ENCODE measurements at regions of chr1 and their contacts with region 1.

Region 1: DNA sequence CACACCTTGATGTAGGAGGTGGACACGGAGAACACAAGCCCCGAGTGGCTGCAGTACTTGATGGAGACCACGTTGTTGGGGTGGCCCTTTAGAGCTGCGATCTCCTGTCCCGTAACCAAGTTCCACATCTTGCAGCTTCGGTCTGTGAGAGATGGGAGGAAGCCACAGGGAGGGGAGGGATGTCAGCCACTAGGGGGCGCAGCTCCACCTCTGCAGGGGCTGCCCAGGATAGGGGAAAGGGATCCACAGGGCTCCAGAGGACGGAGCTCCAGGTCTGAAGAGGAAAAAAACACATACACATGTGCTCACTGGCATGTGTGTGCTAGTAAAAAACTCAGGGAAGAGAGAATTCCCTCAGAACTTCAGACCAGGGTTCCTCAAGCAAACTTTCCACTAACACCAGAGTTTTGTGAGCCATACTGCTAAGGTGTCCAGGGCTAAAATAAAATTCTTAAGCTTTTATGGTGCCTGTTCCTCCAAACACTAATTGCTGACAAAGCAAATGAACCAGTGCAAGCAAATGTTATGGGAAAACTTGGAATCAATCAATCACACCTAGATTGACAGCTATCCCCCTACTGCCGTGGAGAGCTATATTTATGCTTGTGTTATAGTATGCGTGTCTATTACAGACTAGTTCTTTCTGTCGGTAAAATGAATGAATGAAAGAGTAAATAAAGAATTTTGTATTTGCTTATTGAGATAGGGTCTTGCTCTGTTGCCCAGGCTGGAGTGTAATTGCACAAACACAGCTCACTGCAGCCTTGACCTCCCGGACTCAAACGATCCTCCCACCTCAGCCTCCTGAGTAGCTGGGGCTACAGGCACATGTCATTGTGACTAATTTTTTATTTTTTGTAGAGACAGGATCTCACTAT is 43.7 kb downstream of the KIF21B start:
- H3K4me3 ChIP-seq: no peak overlapping the region
- H3K27ac ChIP-seq: no peak overlapping the region
- H3K4me1 ChIP-seq: no peaks in the 10 kb centered on the region
- CTCF ChIP-seq: peak; percentile 21; the same call in 1 of the 2 replicates

Region 2: GRCh38 chr1:200699871-200700270 is 279.9 kb before region 1 on chr1:
- CTCF ChIA-PET with region 1: no interaction called
- POLR2A ChIA-PET with region 1: no interaction called
- H3K4me3 ChIP-seq: no peak overlapping the region
- H3K27ac ChIP-seq: no peak overlapping the region
- H3K4me1 ChIP-seq: no peaks in the 10 kb centered on the region
- CTCF ChIP-seq: no peak

Region 3: DNA sequence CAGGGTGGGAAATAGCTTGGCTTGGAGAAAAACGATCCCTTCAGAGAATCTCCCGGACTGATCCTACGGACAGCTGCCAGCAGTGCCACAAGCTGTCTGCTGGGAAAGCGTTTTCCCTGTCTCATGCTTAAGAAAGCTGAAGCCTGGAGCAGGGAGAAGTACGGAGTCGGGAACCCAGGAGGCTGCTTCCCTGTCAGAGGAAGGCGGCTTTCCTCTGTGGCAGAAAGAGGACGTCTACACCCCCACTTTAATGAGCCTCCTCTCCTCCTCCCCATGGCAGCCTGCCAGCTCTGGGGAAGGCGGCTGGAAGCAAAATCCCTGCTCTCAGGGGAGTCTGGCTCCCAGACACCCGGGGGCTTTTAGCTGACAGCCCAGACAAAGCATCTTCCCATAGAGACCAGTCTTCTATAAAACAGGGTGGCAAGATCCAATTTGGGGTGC is 36.4 kb after region 1 on chr1:
- CTCF ChIA-PET with region 1: interaction called, 18 read pairs
- POLR2A ChIA-PET with region 1: no interaction called
- H3K4me3 ChIP-seq: no peak overlapping the region
- H3K27ac ChIP-seq: no peak overlapping the region
- H3K4me1 ChIP-seq: peaks cover 5% of the 10 kb centered on the region
- CTCF ChIP-seq: no peak

Region 4: DNA sequence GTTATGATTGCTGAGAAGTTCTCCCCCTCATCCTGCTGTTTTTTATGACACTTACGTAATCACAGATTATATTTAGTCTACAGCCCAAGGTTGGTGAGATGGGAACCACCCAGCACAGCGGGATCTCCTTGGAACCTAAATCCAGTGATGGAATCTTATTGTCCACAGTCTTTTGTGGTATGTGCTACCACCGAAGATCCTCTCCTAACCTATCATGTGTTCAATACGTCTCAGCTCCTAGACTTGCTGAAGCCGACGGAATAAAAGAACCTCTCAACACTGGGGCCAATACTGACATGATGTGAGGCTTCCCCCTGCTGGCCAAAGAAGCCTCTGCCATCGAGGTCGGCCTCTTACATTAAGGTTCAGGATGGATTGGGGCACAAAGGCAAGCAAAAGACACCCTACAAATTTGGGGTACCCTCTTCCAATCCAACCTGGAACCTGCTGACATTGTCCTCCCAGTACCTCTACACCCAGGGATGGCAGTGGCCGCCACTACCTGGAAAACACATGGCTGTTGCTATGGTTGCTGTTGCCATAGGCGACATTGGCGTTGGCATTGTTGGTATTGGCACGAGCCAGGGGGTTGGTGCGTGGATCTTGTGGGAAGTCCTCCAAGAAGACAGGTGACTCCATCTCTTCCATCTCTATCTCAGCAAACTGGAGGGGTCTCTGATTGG is 63.1 kb after region 1 on chr1:
- CTCF ChIA-PET with region 1: interaction called, 108 read pairs
- POLR2A ChIA-PET with region 1: no interaction called
- H3K4me3 ChIP-seq: no peak overlapping the region
- H3K27ac ChIP-seq: no peak overlapping the region
- H3K4me1 ChIP-seq: no peaks in the 10 kb centered on the region
- CTCF ChIP-seq: peak; percentile 84

Region 5: DNA sequence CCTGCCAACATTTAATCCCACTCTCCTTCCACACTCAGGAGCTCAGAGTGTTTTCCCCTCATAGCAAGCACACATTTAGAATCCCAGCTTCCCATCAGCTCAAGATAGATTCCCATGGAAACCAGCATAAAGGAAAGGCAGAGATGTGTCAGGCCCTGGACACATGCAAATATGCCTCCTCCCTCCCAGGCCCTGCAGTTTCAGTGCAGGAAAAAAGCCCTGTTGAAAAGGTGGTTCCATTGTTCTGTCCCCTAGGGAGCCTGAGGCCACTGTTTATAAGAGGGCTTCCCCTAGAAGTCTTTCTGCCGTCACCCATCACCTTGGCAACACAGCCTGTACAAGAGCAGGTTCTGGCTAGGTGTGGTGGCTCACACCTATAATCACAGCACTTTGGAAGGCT is 128.8 kb after region 1 on chr1:
- CTCF ChIA-PET with region 1: interaction called, 16 read pairs
- POLR2A ChIA-PET with region 1: no interaction called
- H3K4me3 ChIP-seq: no peak overlapping the region
- H3K27ac ChIP-seq: no peak overlapping the region
- H3K4me1 ChIP-seq: no peaks in the 10 kb centered on the region
- CTCF ChIP-seq: no peak

Region 6: GRCh38 chr1:201119206-201120197 is 139.7 kb after region 1 on chr1:
- CTCF ChIA-PET with region 1: interaction called, 16 read pairs
- POLR2A ChIA-PET with region 1: interaction called, 3 read pairs
- H3K4me3 ChIP-seq: no peak overlapping the region
- H3K27ac ChIP-seq: no peak overlapping the region
- H3K4me1 ChIP-seq: no peaks in the 10 kb centered on the region
- CTCF ChIP-seq: peak; percentile 76

Measured in HEK293 (cell line).